ENCODE measurements at regions of chr15 and their contacts with region 1.

Region 1: DNA sequence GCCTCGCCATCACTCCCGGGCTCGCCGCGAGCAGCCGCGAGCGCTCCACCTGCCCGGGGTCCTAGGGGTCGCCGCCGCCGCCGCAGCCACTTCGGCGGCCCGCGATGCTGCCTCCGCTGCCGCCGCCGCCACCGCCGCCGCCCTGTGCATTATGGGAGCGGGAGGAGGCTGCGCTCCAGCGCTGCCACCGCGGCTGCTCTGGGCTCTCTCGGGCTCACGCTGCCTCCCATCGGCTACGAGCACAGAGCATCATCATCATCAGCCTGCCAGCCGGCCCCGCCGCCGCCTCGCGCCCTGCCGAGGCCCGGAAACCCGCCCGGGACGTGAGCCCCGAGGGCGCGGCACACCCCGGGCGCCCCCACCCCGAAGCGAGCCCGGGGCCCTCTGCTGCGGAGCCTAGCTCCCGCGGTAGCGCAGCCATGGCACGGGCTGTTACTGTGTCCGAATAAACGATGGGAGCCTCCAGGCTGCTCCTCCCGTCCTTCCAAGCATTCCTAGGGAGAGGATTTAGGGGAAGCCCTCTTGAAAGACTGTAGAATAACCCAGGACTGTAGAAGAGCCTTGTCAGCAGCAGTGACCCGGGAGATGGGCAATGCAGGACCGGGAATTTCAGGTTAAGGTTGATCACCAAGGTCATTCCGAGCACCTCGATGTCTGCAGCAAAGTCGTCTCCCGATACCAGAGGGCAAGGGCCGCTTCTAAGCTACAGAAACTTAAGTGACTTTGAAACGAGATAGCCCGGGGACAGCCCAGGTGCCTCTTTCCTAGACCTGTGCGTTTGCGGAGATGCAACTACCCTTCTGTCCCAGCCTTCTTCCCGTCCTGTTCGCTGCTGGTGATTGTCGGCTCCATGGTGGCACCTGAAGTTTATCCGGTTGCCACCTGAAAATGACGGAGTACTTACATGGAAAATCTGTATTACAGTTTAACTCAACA is 579 bp upstream of the MYO5A start:
- DNase-seq: peak; percentile 94
- H3K4me3 Mint-ChIP-seq: peak overlapping the region; percentile 76
- H3K27ac Mint-ChIP-seq: peak overlapping the region; percentile 81
- H3K4me1 Mint-ChIP-seq: peaks cover 30% of the 10 kb centered on the region
- H3K27me3 Mint-ChIP-seq: peaks cover 14% of the 10 kb centered on the region

Region 2: GRCh38 chr15:52261498-52262242 is 267.6 kb before region 1 on chr15:
- intact Hi-C with region 1: loop called (anchors 2 kb)
- DNase-seq: peak; percentile 90
- H3K4me3 Mint-ChIP-seq: peak overlapping the region; percentile 81
- H3K27ac Mint-ChIP-seq: peak overlapping the region; percentile 94
- H3K4me1 Mint-ChIP-seq: peaks cover 43% of the 10 kb centered on the region
- H3K27me3 Mint-ChIP-seq: no peaks in the 10 kb centered on the region

Region 3: GRCh38 chr15:52455412-52455811 is 73.8 kb before region 1 on chr15:
- intact Hi-C with region 1: no loop called
- DNase-seq: no peak
- H3K4me3 Mint-ChIP-seq: no peak overlapping the region
- H3K27ac Mint-ChIP-seq: no peak overlapping the region
- H3K4me1 Mint-ChIP-seq: peaks cover 11% of the 10 kb centered on the region
- H3K27me3 Mint-ChIP-seq: no peaks in the 10 kb centered on the region

Region 4: DNA sequence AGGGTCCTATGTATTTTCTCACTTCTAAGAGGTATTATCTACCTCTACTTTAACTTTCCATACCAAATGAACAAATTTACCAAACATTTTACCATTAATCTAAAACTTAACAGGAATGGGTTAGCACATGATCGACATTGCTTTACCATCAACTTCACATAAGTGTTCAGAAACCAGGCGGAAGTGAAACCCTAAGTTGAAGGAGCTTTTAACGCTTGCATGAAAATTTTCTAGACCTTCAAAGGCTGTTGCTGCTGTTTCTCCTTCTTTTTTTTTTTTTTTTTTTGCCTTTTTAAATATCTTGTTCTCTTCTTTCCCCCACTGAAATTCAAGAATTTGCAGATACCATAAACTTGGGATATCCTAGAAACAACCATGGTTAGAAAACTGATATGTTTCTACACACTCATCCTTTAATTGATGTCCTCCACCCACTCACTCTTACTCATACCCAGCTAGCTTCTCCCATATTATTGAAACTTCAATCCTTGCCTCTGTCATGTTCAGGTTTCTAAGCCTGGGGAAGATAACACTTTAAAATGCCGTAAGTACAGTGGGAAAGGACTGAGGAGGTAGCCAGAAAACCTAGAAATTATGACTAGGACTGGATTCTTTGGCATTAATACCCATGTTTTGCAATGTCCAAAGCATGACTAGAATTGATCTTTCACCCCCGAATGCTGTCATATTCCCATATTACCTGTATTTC is 25.3 kb before region 1 on chr15:
- intact Hi-C with region 1: no loop called
- DNase-seq: no peak
- H3K4me3 Mint-ChIP-seq: peak overlapping the region; percentile 47
- H3K27ac Mint-ChIP-seq: peak overlapping the region; percentile 3
- H3K4me1 Mint-ChIP-seq: peaks cover 15% of the 10 kb centered on the region
- H3K27me3 Mint-ChIP-seq: no peaks in the 10 kb centered on the region

Region 5: DNA sequence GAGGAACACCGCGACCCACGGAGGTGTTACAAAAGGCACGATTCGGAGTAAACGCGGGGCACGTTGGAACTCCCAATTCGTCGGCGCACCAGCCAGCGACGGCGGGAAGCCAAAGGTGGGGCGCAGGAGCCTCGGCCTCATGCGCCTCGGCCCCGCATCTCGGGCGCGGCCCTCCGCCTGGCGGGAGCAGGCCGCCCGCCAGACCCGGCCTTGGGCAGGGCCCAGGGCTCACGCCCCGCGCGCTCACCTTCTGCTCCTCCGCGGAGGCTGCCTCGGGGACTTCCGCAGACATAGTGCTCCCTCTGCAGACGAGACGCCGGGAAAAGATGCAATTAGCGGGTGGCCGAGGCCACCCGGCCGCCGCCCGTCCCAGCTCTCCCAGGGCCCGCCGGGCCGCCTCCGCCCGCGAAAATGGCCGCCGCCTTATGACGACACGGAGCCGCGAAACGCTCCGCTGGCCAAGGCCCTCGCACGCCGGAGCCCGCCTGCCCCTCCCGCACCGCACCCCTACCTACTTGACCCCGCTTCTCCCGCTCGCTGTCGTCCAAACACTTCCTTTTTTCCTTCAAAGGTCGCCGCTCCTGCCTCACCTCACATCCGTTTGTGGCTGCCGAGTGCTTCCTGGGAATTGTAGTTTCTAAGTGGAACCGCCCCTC is 39.5 kb after region 1 on chr15 and contains the start of gene ARPP19:
- intact Hi-C with region 1: loop called (anchors 1 kb)
- DNase-seq: peak; percentile 94
- H3K4me3 Mint-ChIP-seq: peak within 1 kb of the TSS; percentile 88
- H3K27ac Mint-ChIP-seq: peak within 1 kb of the TSS; percentile 99
- H3K4me1 Mint-ChIP-seq: peaks cover 29% of the 10 kb centered on the region
- H3K27me3 Mint-ChIP-seq: peaks cover 1% of the 10 kb centered on the region
- total RNA-seq, gene ARPP19: 191 and 215 TPM in 2 replicates

Region 6: GRCh38 chr15:52735231-52736089 is 206.2 kb after region 1 on chr15:
- intact Hi-C with region 1: loop called (anchors 10 kb)
- DNase-seq: peak; percentile 94
- H3K4me3 Mint-ChIP-seq: no peak overlapping the region
- H3K27ac Mint-ChIP-seq: peak overlapping the region; percentile 18
- H3K4me1 Mint-ChIP-seq: peaks cover 17% of the 10 kb centered on the region
- H3K27me3 Mint-ChIP-seq: peaks cover 8% of the 10 kb centered on the region